ENCODE measurements at regions of chr6 and their contacts with region 1.

Region 1: GRCh38 chr6:136792410-136793262 is at the start of gene MAP3K5:
- DNase-seq: peak; percentile 80
- CTCF ChIP-seq: peak; percentile 93

Region 2: GRCh38 chr6:136582711-136583471 is 209.7 kb before region 1 on chr6:
- CTCF ChIA-PET with region 1: interaction called, 11 read pairs
- POLR2A ChIA-PET with region 1: no interaction called
- DNase-seq: no peak
- CTCF ChIP-seq: no peak

Region 3: GRCh38 chr6:136635615-136636014 is 157.0 kb before region 1 on chr6:
- CTCF ChIA-PET with region 1: interaction called, 348 read pairs
- POLR2A ChIA-PET with region 1: no interaction called
- DNase-seq: no peak
- CTCF ChIP-seq: no peak

Region 4: GRCh38 chr6:136701045-136701444 is 91.6 kb before region 1 on chr6:
- CTCF ChIA-PET with region 1: interaction called, 20 read pairs
- POLR2A ChIA-PET with region 1: no interaction called
- DNase-seq: no peak
- CTCF ChIP-seq: no peak

Region 5: GRCh38 chr6:136737871-136738691 is 54.6 kb before region 1 on chr6:
- CTCF ChIA-PET with region 1: interaction called, 20 read pairs
- POLR2A ChIA-PET with region 1: interaction called, 5 read pairs
- DNase-seq: no peak
- CTCF ChIP-seq: no peak

Region 6: DNA sequence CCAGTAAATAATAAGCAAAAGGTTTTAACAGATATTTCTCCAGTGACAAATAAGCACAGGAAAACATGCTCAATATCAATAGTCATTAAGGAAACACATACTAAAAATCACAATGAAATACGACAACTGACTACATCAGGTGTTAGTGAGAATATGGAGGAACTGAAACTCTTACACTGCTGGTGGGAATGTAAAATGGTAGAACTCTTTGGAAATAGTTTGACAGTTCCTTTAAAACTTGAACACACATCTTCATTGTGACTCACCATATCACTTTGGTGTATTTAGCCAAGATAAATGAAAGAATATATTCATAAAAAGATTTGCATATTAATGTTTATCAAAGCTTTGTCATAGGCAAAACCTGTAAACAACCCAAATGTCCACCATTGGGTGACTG is 11.0 kb after region 1 on chr6:
- CTCF ChIA-PET with region 1: interaction called, 35 read pairs
- POLR2A ChIA-PET with region 1: no interaction called
- DNase-seq: no peak
- CTCF ChIP-seq: no peak

Region 7: GRCh38 chr6:137033828-137034227 is 241.2 kb after region 1 on chr6:
- CTCF ChIA-PET with region 1: no interaction called
- POLR2A ChIA-PET with region 1: no interaction called
- DNase-seq: peak; percentile 53
- CTCF ChIP-seq: no peak

Region 8: GRCh38 chr6:137122610-137123009 is 330.0 kb after region 1 on chr6:
- CTCF ChIA-PET with region 1: no interaction called
- POLR2A ChIA-PET with region 1: no interaction called
- DNase-seq: peak; percentile 28
- CTCF ChIP-seq: no peak